Activated T-helper 2 cell treated with anti-CD3 and anti-CD28 coated beads, Interferon-gamma antibody, Interleukin-2, Interleukin-4, amounts not matched to agents 10 μg/mL and 5 μg/mL and 100 μg/mL, durations not matched to agents 14 hours and 24 hours and 36 hours (primary cell): ENCODE measurements at regions of chr3 and their contacts with region 1.

Region 1: DNA sequence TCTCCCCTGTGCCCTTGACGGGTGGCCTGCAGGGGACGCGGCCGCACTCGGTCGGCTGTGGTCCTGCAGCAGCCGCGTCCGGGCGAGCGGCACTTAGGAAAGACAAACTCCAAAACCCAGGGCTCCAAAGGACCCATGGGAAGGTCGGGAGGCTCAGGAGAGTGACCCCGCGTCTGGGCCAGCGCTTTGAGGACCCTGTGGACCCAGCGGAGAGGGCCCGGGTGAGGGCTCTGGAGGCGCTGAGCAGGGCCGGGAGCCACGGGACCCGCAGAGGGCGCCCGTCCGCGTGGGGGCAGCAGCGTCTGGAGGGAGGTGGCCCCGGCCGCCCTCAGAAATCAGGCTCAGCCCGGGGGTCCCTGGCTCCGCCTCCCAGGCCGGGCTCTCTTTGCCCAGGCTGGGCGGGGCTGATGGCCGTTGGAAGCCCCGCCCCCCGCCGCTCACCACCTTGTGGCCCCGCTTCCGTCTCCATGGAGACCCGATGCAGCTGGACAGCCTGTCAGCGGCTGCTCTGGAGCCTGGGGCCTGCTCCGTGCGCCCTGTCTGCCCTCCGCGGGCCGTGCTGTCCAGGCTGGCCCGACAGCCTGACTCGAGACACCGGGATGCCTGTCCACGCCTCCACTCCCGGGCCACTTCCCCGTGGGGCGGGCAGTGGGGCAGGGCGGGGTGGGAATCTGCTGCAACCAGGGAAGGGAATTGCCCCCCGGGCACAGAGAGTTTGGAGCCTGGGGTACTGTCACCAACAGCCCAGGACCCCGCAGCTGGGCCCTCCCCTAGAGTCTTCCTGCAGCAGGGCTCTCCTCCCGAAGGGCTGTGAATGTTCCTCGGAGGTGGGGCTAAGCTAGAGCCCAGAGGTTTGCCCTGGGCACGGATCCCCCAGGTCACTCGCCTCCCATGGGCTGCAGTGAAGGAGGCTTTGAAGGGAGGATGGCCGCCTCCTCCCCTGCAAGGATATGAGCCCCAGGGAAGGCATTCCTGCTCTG is 34.8 kb upstream of the RPL32 start:
- DNase-seq: no peak
- H3K4me3 Mint-ChIP-seq: no peak overlapping the region
- H3K27ac Mint-ChIP-seq: no peak overlapping the region
- H3K4me1 Mint-ChIP-seq: no peaks in the 10 kb centered on the region
- H3K27me3 Mint-ChIP-seq: peaks cover 12% of the 10 kb centered on the region

Region 2: GRCh38 chr3:11910971-11911531 is 965.1 kb before region 1 on chr3:
- intact Hi-C with region 1: loop called (anchors 10 kb)
- DNase-seq: no peak
- H3K4me3 Mint-ChIP-seq: no peak overlapping the region
- H3K27ac Mint-ChIP-seq: no peak overlapping the region
- H3K4me1 Mint-ChIP-seq: no peaks in the 10 kb centered on the region
- H3K27me3 Mint-ChIP-seq: no peaks in the 10 kb centered on the region